ENCODE measurements at regions of chr17 and their contacts with region 1.

Region 1: DNA sequence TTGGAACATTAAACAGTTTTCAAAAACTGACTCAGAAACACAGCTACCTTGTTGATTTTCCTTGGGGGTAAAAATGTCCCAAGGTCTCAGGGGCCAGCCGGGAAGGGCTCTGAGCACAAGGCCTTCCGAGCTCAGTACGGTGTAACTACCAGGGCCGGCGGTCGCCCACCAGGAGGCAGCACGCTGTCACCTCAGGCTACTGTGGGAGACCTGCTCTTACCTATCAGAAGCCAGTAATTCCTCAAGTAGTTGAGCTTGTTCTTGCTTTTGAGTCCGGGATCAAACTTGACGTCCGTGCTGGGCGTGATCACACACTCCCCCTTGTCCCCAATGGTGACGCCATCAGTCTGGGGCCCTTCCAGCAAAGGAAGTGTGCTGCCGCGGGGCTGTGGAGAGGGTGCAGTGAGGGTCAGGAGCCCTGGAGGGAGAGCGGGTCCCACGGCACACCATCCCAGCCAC is 43.4 kb upstream of the ICAM2 start:
- DNase-seq: no peak
- ATAC-seq: peak; percentile 73
- H3K4me3 ChIP-seq: no peak overlapping the region
- H3K27ac ChIP-seq: no peak overlapping the region
- H3K4me1 ChIP-seq: no peaks in the 10 kb centered on the region
- H3K27me3 ChIP-seq: no peaks in the 10 kb centered on the region
- CTCF ChIP-seq: peak; percentile 63

Region 2: GRCh38 chr17:63931099-63931561 is 132.7 kb before region 1 on chr17:
- CTCF ChIA-PET with region 1: no interaction called
- POLR2A ChIA-PET with region 1: no interaction called
- in situ Hi-C with region 1: no loop called
- intact Hi-C with region 1: no loop called
- DNase-seq: no peak
- ATAC-seq: no peak
- H3K4me3 ChIP-seq: no peak overlapping the region
- H3K27ac ChIP-seq: no peak overlapping the region
- H3K4me1 ChIP-seq: no peaks in the 10 kb centered on the region
- H3K27me3 ChIP-seq: no peaks in the 10 kb centered on the region
- CTCF ChIP-seq: no peak

Region 3: DNA sequence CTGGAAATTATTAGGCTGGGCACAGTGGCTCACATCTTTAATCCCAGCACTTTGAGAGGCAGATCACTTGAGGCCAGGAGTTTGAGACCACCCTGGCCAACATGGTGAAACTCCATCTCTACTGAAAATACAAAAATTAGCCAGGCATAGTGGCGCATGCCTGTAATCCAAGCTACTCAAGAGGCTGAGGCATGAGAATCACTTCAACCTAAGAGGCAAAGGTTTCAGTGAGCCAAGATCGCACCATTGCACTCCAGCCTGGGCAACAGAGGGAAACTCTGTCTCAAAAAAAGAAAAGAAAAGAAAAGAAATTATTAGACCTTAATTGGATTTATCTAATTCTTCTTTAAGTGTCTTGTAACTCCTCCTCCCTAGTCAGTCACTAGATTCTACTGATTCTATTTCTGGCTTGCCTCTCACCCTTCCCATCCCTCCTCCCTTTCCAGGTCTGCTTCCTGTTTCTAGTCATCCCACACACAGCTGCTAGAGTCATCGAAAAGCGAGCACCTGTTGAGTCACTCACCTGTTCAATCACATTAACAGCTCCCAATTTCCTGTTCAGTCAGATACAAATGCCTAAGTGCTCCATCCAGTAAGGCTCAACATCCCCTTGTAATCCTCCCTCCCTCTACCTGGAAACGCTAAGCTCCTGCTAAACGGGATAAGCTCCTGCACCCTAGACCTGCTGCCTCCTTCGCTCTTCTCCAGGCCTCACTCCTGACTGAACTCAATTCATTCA is 31.5 kb after region 1 on chr17:
- CTCF ChIA-PET with region 1: interaction called, 11 read pairs
- POLR2A ChIA-PET with region 1: no interaction called
- in situ Hi-C with region 1: no loop called
- intact Hi-C with region 1: no loop called
- DNase-seq: no peak
- ATAC-seq: no peak
- H3K4me3 ChIP-seq: no peak overlapping the region
- H3K27ac ChIP-seq: no peak overlapping the region
- H3K4me1 ChIP-seq: no peaks in the 10 kb centered on the region
- H3K27me3 ChIP-seq: no peaks in the 10 kb centered on the region
- CTCF ChIP-seq: no peak

Region 4: GRCh38 chr17:64129764-64130558 is 66.2 kb after region 1 on chr17 and contains the start of gene ERN1:
- CTCF ChIA-PET with region 1: interaction called, 14 read pairs
- POLR2A ChIA-PET with region 1: interaction called, 3 read pairs
- in situ Hi-C with region 1: no loop called
- intact Hi-C with region 1: loop called (anchors 10 kb)
- DNase-seq: no peak
- ATAC-seq: peak; percentile 96
- H3K4me3 ChIP-seq: peak within 1 kb of the TSS; percentile 77 to 80
- H3K27ac ChIP-seq: peak within 1 kb of the TSS; percentile 79
- H3K4me1 ChIP-seq: peaks cover 6% of the 10 kb centered on the region; the same call in 1 of the 2 replicates
- H3K27me3 ChIP-seq: no peaks in the 10 kb centered on the region
- CTCF ChIP-seq: no peak
- total RNA-seq, gene ERN1: 12.1 TPM

Region 5: DNA sequence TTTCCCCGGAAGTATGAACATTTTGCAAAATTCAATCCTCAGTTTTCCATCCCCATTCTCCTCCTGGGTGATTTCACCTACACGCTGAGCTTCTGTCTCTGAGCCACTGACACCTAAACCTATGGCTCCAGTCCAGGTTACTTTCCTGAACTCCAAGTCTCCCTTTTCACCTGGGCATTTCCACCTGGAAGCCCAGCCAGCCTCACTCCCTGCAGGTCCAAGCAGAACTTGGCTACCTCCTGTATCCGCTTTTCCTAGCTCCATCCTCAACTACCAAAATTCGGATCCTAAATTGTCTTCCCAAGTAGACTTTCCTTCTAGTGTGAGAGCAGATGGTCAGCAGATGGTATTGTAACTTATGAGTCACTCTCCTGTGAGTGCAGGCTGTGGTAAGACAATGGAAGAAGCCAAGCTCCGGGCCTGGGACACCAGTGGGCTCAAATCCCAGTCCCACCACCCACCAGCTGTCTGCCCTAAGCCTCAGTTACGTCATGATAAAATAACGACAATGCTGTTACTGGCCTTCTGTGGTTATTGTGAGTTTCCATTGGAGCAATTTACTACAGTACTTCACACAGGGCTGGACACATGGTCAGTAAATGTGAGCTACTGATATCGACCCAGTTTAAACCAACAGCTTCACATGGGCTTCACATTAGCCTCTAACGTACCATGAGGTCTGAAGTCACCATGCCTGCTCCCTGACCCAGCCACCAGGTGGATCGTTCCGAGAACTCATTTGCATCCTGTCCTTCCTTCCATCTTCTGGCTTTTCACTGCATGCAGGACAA is 293.6 kb after region 1 on chr17:
- CTCF ChIA-PET with region 1: no interaction called
- POLR2A ChIA-PET with region 1: no interaction called
- in situ Hi-C with region 1: no loop called
- intact Hi-C with region 1: no loop called
- DNase-seq: no peak
- ATAC-seq: no peak
- H3K4me3 ChIP-seq: no peak overlapping the region
- H3K27ac ChIP-seq: no peak overlapping the region
- H3K4me1 ChIP-seq: no peaks in the 10 kb centered on the region
- H3K27me3 ChIP-seq: no peaks in the 10 kb centered on the region
- CTCF ChIP-seq: no peak